MCF 10A (cell line): ENCODE measurements at regions of chr22 and their contacts with region 1.

Region 1: GRCh38 chr22:39253435-39254070 is 8.8 kb upstream of the PDGFB start:
- DNase-seq: peak; percentile 91
- H3K4me3 Mint-ChIP-seq: no peak overlapping the region
- H3K27ac Mint-ChIP-seq: no peak overlapping the region
- H3K4me1 Mint-ChIP-seq: peaks cover 21% of the 10 kb centered on the region
- H3K27me3 Mint-ChIP-seq: no peaks in the 10 kb centered on the region
- CTCF ChIP-seq: no peak

Region 2: DNA sequence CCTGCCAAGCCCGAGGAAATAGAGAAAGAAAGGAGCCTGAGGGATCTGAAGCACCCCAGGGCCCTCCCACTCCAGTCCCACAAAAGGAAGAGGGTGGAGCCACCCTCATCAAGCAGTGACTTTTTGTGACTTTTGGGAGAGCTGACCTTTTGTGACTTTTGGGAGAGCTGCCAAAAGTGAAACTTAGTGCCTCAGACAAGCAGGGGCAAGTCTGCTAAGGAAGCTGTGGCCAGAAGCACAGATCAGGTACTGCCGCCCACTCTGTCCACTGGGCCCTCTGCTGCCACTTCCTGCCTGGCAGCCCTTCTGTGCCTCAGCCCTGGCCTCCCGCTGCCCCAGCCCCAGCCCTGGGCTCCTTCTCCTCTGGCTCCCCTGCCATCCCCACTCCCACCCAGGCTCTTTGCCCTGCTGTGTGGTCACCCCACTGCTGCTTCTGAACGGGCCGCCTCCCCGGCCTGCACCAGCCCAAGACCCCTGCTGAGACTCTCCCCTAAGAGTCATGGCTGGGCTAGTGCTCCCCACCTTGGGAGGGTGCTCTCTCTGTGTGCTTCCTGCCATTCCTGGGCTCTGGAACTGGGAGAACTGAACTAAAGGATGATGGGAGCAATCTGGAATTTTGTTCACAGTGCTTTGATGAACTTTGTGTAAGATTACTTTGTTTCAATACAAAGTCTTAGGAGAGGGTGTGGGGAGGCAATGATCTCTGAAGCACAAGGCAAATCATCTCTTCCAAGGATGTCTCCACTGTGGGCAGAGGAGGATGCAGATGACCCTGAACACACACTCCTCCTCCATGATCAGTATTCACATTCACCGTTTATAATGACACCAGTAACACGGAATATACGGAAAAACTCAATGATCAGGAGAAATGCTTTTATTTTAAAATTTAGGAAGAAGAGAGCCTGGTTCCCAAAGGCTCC is 156.2 kb before region 1 on chr22 and contains the start of gene APOBEC3H:
- CTCF ChIA-PET with region 1: no interaction called
- POLR2A ChIA-PET with region 1: no interaction called
- intact Hi-C with region 1: no loop called
- DNase-seq: peak; percentile 92
- H3K4me3 Mint-ChIP-seq: peak within 1 kb of the TSS; percentile 53
- H3K27ac Mint-ChIP-seq: peak within 1 kb of the TSS; percentile 88
- H3K4me1 Mint-ChIP-seq: peaks cover 7% of the 10 kb centered on the region
- H3K27me3 Mint-ChIP-seq: no peaks in the 10 kb centered on the region
- CTCF ChIP-seq: no peak
- total RNA-seq, gene APOBEC3H: 0.86 and 1.2 TPM in 2 replicates

Region 3: GRCh38 chr22:39170825-39171622 is 82.5 kb before region 1 on chr22:
- CTCF ChIA-PET with region 1: interaction called, 3 read pairs
- POLR2A ChIA-PET with region 1: interaction called, 3 read pairs
- intact Hi-C with region 1: loop called (anchors 5 kb)
- DNase-seq: peak; percentile 76
- H3K4me3 Mint-ChIP-seq: no peak overlapping the region
- H3K27ac Mint-ChIP-seq: no peak overlapping the region
- H3K4me1 Mint-ChIP-seq: peaks cover 36% of the 10 kb centered on the region
- H3K27me3 Mint-ChIP-seq: no peaks in the 10 kb centered on the region
- CTCF ChIP-seq: peak; percentile 96

Region 4: GRCh38 chr22:39240828-39241793 is 12.4 kb before region 1 on chr22:
- CTCF ChIA-PET with region 1: no interaction called
- POLR2A ChIA-PET with region 1: interaction called, 17 read pairs
- intact Hi-C with region 1: no loop called
- DNase-seq: no peak
- H3K4me3 Mint-ChIP-seq: peak overlapping the region; percentile 45
- H3K27ac Mint-ChIP-seq: no peak overlapping the region
- H3K4me1 Mint-ChIP-seq: peaks cover 37% of the 10 kb centered on the region
- H3K27me3 Mint-ChIP-seq: peaks cover 34% of the 10 kb centered on the region
- CTCF ChIP-seq: no peak

Region 5: GRCh38 chr22:39292561-39293098 is 39.1 kb after region 1 on chr22:
- CTCF ChIA-PET with region 1: interaction called, 4 read pairs
- POLR2A ChIA-PET with region 1: interaction called, 4 read pairs
- intact Hi-C with region 1: loop called (anchors 5 kb)
- DNase-seq: peak; percentile 96
- H3K4me3 Mint-ChIP-seq: peak overlapping the region; percentile 38
- H3K27ac Mint-ChIP-seq: peak overlapping the region; percentile 75
- H3K4me1 Mint-ChIP-seq: peaks cover 15% of the 10 kb centered on the region
- H3K27me3 Mint-ChIP-seq: no peaks in the 10 kb centered on the region
- CTCF ChIP-seq: no peak

Region 6: GRCh38 chr22:39349506-39349966 is 96.0 kb after region 1 on chr22:
- CTCF ChIA-PET with region 1: no interaction called
- POLR2A ChIA-PET with region 1: no interaction called
- intact Hi-C with region 1: no loop called
- DNase-seq: no peak
- H3K4me3 Mint-ChIP-seq: peak overlapping the region; percentile 63
- H3K27ac Mint-ChIP-seq: no peak overlapping the region
- H3K4me1 Mint-ChIP-seq: no peaks in the 10 kb centered on the region
- H3K27me3 Mint-ChIP-seq: peaks cover 14% of the 10 kb centered on the region
- CTCF ChIP-seq: no peak